Gastrocnemius medialis (tissue), 4 donors: ENCODE measurements at regions of chr5 and their contacts with region 1.

Region 1: GRCh38 chr5:16791036-16791705 is 144.9 kb downstream of the MYO10 start:
- DNase-seq: no peak
- ATAC-seq: peak; percentile 64 to 83
- H3K4me3 ChIP-seq: peak overlapping the region; percentile 28 to 37 (median 32)
- H3K27ac ChIP-seq: peak overlapping the region in 2 of 4 donors; percentile 3 to 39
- H3K4me1 ChIP-seq: peaks cover 0 to 6% of the 10 kb centered on the region in 2 donors
- H3K27me3 ChIP-seq: no peaks in the 10 kb centered on the region
- CTCF ChIP-seq: peak; percentile 77 to 83 (median 79)
- POLR2A ChIP-seq: no peak

Region 2: DNA sequence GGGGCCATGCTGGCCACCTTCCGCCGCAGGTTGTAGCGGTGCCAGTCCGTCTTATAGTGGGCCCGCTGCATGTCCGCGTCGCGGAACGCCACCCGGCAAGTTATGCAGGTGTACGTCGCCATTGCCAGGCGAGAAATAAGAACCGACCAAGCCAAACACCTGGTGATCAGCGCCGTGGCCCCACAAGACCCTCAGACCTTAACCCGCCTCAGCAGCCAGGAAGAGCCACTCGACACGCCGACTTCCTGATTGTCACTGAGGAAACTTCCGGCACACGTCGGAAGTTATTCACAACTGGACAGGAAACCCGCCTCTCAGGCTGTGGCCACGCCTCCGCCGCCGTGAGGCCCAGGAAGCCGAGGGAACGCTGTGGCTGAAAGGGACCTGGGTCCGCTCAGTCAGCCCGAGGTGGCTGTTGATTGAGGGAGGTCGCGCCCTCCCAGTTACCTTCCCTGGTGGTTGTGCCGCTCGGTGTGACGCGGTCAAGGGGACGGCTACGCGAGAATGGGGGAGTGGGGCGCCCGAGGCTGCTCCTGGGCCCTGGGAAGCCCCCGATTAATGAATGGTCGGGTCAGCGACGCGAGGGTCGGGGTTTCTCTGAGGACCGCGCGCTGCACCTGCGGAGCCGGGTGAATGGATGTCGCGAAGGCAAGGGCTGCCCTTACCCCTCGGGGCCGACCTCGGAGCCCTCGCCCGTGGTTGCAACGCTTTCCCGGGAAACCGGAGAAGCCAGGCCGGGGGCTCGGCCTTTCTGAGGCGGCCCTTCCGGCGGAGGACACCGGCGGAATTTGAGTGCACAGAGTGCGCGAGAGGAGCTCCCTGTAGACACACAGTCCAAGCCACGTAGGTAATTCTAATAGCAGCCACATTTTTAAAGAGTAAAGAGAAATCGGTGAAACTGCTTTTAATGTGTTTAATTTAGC is 325.4 kb before region 1 on chr5 and contains the start of gene ZNF622:
- in situ Hi-C with region 1: loop called in 2 of 4 experiments (anchors 25 kb)
- intact Hi-C with region 1: no loop called
- DNase-seq: peak; percentile 87 to 91
- ATAC-seq: peak; percentile 51 to 74
- H3K4me3 ChIP-seq: peak within 1 kb of the TSS; percentile 78 to 97 (median 92)
- H3K27ac ChIP-seq: peak within 1 kb of the TSS; percentile 87 to 94 (median 92)
- H3K4me1 ChIP-seq: peaks cover 84 to 85% of the 10 kb centered on the region in 2 donors
- H3K27me3 ChIP-seq: no peaks in the 10 kb centered on the region
- CTCF ChIP-seq: no peak
- POLR2A ChIP-seq: peak; percentile 92 to 96
- total RNA-seq, gene ZNF622: 44.8 to 150 (median 75.1) TPM

Region 3: GRCh38 chr5:16866795-16867236 is 75.6 kb after region 1 on chr5:
- in situ Hi-C with region 1: no loop called
- intact Hi-C with region 1: no loop called
- DNase-seq: no peak
- ATAC-seq: no peak
- H3K4me3 ChIP-seq: no peak overlapping the region
- H3K27ac ChIP-seq: no peak overlapping the region
- H3K4me1 ChIP-seq: peaks cover 0 to 14% of the 10 kb centered on the region in 2 donors
- H3K27me3 ChIP-seq: no peaks in the 10 kb centered on the region
- CTCF ChIP-seq: no peak
- POLR2A ChIP-seq: no peak

Region 4: DNA sequence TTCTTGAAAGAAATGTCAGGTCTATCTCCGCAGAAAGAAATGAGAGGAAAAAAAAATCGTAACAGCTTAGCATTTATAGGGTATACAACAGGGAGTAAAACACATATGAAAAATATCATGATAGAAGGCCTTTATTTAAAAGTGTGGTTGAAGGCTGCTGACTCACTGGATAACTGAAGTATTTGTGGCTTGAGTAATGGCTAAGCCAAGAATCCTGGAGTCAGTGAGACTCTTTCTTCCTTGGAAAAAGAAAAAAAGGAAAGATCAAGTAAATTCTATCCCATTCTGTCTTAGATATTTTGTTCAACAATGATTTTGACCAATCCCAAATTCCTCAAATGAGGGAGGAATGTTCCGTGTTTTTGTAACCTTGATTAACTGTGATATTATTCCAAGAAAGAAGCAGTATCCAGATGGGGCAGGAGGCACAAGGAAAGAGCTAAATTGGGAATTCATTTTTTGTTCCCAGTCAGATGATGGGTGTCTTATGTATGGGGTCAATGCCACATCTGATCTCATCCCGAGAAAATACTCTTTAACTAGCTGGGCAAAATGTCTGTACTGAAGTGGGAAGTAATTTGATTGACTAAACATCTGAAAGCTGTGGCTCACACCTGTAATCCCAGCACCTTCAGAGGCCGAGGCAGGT is 209.2 kb after region 1 on chr5:
- in situ Hi-C with region 1: no loop called
- intact Hi-C with region 1: loop called (anchors 5 kb)
- DNase-seq: no peak
- ATAC-seq: peak in 1 of 2 donors; percentile 8
- H3K4me3 ChIP-seq: no peak overlapping the region
- H3K27ac ChIP-seq: peak overlapping the region in 1 of 4 donors; percentile 14
- H3K4me1 ChIP-seq: peaks cover 18 to 23% of the 10 kb centered on the region in 2 donors
- H3K27me3 ChIP-seq: no peaks in the 10 kb centered on the region
- CTCF ChIP-seq: no peak
- POLR2A ChIP-seq: no peak

Region 5: GRCh38 chr5:17132444-17133083 is 341.4 kb after region 1 on chr5:
- in situ Hi-C with region 1: loop called in 3 of 4 experiments (anchors 5 to 10 kb)
- intact Hi-C with region 1: loop called (anchors 1 kb)
- DNase-seq: no peak
- ATAC-seq: no peak
- H3K4me3 ChIP-seq: no peak overlapping the region
- H3K27ac ChIP-seq: no peak overlapping the region
- H3K4me1 ChIP-seq: no peaks in the 10 kb centered on the region
- H3K27me3 ChIP-seq: no peaks in the 10 kb centered on the region
- CTCF ChIP-seq: peak; percentile 46 to 67 (median 59)
- POLR2A ChIP-seq: no peak